Activated T-helper 2 cell treated with anti-CD3 and anti-CD28 coated beads, Interferon-gamma antibody, Interleukin-2, Interleukin-4, amounts not matched to agents 10 μg/mL and 5 μg/mL and 100 μg/mL, durations not matched to agents 14 hours and 24 hours and 36 hours (primary cell): ENCODE measurements at regions of chr18 and their contacts with region 1.

Region 1: GRCh38 chr18:45874491-45875184 is 49.2 kb downstream of the SIGLEC15 start:
- DNase-seq: peak; percentile 38
- H3K4me3 Mint-ChIP-seq: peak overlapping the region; percentile 6
- H3K27ac Mint-ChIP-seq: peak overlapping the region; percentile 89
- H3K4me1 Mint-ChIP-seq: peaks cover 24% of the 10 kb centered on the region
- H3K27me3 Mint-ChIP-seq: no peaks in the 10 kb centered on the region

Region 2: GRCh38 chr18:45802608-45803492 is 71.8 kb before region 1 on chr18:
- intact Hi-C with region 1: loop called (anchors 2 kb)
- DNase-seq: no peak
- H3K4me3 Mint-ChIP-seq: no peak overlapping the region
- H3K27ac Mint-ChIP-seq: no peak overlapping the region
- H3K4me1 Mint-ChIP-seq: peaks cover 7% of the 10 kb centered on the region
- H3K27me3 Mint-ChIP-seq: no peaks in the 10 kb centered on the region

Region 3: DNA sequence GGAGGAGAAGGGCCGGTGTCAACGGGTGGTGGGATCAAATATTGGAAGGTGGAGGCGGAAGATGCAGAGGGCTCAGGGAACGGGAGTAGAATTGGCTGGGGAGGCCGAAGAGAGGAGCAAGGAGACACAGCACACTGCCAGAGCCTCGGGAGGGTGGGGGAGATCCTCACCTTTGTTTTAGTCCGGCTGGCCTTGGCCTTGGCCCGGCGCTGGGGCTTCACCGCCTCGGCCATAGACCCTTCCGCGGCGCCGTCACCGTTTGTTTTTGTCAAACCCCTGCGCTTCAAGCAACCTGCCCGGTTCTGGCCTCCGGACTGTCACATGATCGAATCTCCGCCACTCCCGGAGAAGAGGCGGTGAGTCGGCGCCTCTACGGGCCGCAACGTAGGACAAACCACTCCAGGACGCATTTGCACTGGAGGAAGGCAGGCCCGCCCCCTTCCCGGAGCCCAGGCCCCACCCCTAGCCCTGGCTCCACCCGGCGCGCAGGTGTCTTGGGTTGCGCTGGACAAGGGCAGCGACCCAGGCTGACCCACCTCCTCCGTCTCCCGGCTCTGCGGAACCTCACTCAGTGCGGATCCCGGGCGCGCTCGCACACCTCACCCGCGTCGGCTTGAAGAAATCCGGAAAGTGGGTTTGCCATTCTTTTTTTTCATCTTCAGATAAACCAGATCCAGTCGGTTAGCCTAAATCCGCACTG is 92.5 kb after region 1 on chr18 and contains the start of gene EPG5:
- intact Hi-C with region 1: loop called (anchors 2 kb)
- DNase-seq: peak; percentile 92
- H3K4me3 Mint-ChIP-seq: peak within 1 kb of the TSS; percentile 98
- H3K27ac Mint-ChIP-seq: peak within 1 kb of the TSS; percentile 91
- H3K4me1 Mint-ChIP-seq: peaks cover 31% of the 10 kb centered on the region
- H3K27me3 Mint-ChIP-seq: no peaks in the 10 kb centered on the region
- total RNA-seq, gene EPG5: 17.1 and 17.4 TPM in 2 replicates

Region 4: DNA sequence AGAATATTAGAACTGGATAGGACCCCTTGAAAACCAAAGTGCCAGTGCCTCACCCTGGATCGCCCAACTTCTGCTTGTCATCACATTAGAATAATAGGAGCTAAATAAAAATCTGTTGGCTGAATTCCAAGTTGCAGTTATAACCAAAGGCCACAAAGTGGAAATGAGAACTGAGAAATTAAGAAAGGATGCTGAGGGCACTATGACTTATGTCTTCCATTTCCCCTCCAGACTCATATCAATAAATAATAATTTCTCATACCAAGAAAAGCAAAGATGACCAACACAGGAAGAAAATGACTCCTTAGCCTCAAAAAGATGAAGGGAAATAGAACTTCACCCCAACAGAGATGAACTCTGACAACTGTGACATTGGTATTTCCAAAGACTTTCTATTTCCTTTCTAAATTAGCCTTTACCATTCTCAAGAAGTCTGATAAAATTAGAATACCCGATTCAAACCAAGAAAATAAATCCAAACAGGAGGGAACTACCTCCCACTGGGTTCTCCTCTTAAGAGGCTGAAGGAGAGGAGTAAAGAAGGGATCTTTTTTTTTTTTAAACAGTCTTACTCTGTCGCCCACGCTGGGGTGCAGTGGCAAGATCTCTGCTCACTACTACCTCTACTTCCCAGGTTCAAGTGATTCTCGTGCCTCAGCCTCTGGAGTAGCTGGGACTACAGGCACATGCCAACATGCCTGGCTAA is 139.0 kb after region 1 on chr18:
- intact Hi-C with region 1: loop called (anchors 1 kb)
- DNase-seq: no peak
- H3K4me3 Mint-ChIP-seq: no peak overlapping the region
- H3K27ac Mint-ChIP-seq: peak overlapping the region; percentile 53
- H3K4me1 Mint-ChIP-seq: peaks cover 18% of the 10 kb centered on the region
- H3K27me3 Mint-ChIP-seq: no peaks in the 10 kb centered on the region